Activated CD4-positive, alpha-beta T cell treated with anti-CD3 and anti-CD28 coated beads for 36 hours (primary cell): ENCODE measurements at regions of chr6 and their contacts with region 1.

Region 1: DNA sequence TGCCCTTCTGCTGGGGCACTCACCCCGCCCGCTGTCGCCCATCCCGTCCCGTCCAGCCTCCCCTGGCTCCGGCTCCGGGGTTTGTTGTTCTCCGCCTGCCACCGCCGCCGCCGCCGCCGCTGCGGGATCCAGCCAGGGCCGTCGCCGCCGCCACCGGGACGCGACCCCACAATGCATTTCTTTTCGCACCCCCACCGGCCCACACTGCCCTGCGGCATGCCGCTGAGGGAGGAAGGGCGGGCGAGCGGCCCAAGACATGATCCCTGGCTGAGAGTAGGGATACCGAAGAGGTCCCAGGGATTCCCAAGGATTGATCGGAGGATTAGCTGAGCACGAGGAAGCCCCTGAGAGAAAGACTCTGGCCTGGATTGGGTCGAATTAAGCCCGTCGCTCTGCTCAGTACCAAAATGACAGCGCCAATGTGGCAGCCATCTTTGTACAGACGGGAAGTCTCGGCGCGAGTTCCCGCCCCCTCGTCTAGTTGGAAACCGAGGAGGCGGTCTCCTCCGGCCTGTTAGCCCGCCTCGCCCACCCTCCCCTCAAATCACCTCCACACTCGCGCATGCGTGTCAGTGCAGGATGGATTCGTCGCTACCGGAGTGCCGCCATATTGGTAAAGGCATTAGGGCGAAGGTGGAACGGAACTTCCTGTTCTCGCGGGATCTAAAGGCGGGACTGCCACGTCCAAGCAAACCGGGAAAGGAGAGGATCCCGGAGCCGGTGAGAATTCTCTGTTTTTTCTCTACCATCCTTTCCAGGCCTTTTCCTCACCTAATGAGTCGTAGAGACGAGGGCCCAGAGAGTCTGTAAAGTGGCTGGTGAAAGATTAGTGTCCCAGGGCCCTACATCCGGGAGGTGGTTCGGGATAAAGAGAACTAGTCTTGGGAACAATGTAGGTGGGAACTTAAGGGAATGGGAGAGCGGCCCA is at the starts of genes RXRB and SLC39A7:
- DNase-seq: peak; percentile 100
- ATAC-seq: peak; percentile 64
- H3K4me3 Mint-ChIP-seq: peak within 1 kb of the TSS; percentile 100
- H3K27ac Mint-ChIP-seq: peak within 1 kb of the TSS; percentile 99
- H3K4me1 Mint-ChIP-seq: peaks cover 64% of the 10 kb centered on the region
- H3K27me3 Mint-ChIP-seq: no peaks in the 10 kb centered on the region
- total RNA-seq, gene RXRB: 41.0 to 45.4 TPM
- total RNA-seq, gene SLC39A7: 33.0 to 41.8 TPM

Region 2: GRCh38 chr6:31739639-31740396 is 1460.7 kb before region 1 on chr6 and contains the start of gene MSH5:
- CTCF ChIA-PET with region 1: interaction called, 3 read pairs
- POLR2A ChIA-PET with region 1: no interaction called
- intact Hi-C with region 1: loop called in 1 of 2 experiments (anchors 10 kb)
- DNase-seq: peak; percentile 98
- ATAC-seq: peak; percentile 87
- H3K4me3 Mint-ChIP-seq: peak within 1 kb of the TSS; percentile 96
- H3K27ac Mint-ChIP-seq: peak within 1 kb of the TSS; percentile 86
- H3K4me1 Mint-ChIP-seq: peaks cover 46% of the 10 kb centered on the region
- H3K27me3 Mint-ChIP-seq: no peaks in the 10 kb centered on the region
- total RNA-seq, gene MSH5: 92.1 to 126 TPM

Region 3: DNA sequence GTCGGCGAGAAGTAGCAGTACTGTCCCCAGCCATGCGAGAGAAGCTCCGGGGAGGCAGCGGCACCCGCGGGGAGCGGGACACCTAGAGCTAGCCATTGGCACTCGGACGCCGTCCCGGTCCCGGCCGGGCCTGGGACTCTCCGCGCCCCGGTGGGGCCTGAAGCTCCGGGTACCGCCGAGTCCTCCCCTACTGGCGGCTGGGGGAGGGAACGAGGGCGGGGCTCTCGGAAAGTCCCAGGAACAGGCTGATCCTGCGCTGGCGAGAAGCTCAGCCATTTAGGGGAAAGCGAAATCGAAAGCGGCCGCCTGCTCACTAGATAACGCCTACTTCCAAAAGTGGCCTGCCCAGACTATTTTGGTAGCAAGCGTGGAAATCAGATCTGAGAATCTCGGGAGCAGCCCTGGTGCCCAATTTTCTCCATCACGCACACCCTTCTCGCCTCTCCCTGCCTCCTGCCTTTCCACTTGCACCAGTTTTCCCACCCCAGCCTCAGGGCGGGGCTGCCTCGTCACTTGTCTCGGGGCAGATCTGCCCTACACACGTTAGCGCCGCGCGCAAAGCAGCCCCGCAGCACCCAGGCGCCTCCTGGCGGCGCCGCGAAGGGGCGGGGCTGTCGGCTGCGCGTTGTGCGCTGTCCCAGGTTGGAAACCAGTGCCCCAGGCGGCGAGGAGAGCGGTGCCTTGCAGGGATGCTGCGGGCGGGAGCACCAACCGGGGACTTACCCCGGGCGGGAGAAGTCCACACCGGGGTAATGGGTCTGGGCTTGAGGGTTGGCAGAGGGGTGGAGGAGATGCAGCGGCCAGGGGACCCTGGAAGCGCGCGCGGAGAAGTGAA is 346.7 kb before region 1 on chr6 and contains the starts of genes PSMB9 and TAP1:
- CTCF ChIA-PET with region 1: no interaction called
- POLR2A ChIA-PET with region 1: no interaction called
- intact Hi-C with region 1: loop called in 1 of 2 experiments (anchors 2 kb)
- DNase-seq: peak; percentile 98
- ATAC-seq: peak; percentile 84
- H3K4me3 Mint-ChIP-seq: peak within 1 kb of the TSS; percentile 100
- H3K27ac Mint-ChIP-seq: peak within 1 kb of the TSS; percentile 99
- H3K4me1 Mint-ChIP-seq: peaks cover 62% of the 10 kb centered on the region
- H3K27me3 Mint-ChIP-seq: no peaks in the 10 kb centered on the region
- total RNA-seq, gene PSMB9: 210 to 282 TPM
- total RNA-seq, gene TAP1: 191 to 255 TPM

Region 4: GRCh38 chr6:33161354-33162331 is 38.8 kb before region 1 on chr6:
- CTCF ChIA-PET with region 1: interaction called, 5 read pairs
- POLR2A ChIA-PET with region 1: no interaction called
- intact Hi-C with region 1: loop called (anchors 1 kb)
- DNase-seq: peak; percentile 90
- ATAC-seq: peak; percentile 95
- H3K4me3 Mint-ChIP-seq: peak overlapping the region; percentile 71
- H3K27ac Mint-ChIP-seq: peak overlapping the region; percentile 43
- H3K4me1 Mint-ChIP-seq: peaks cover 10% of the 10 kb centered on the region
- H3K27me3 Mint-ChIP-seq: peaks cover 4% of the 10 kb centered on the region

Region 5: GRCh38 chr6:33288921-33289748 is 88.7 kb after region 1 on chr6 and contains the starts of genes PFDN6 and WDR46:
- CTCF ChIA-PET with region 1: interaction called, 3 read pairs
- POLR2A ChIA-PET with region 1: no interaction called
- intact Hi-C with region 1: loop called in 1 of 2 experiments (anchors 1 kb)
- DNase-seq: peak; percentile 87
- ATAC-seq: peak; percentile 98
- H3K4me3 Mint-ChIP-seq: peak within 1 kb of the TSS; percentile 98
- H3K27ac Mint-ChIP-seq: peak within 1 kb of the TSS; percentile 97
- H3K4me1 Mint-ChIP-seq: peaks cover 37% of the 10 kb centered on the region
- H3K27me3 Mint-ChIP-seq: no peaks in the 10 kb centered on the region
- total RNA-seq, gene PFDN6: 65.4 to 96.9 TPM
- total RNA-seq, gene WDR46: 63.5 to 69.4 TPM

Region 6: DNA sequence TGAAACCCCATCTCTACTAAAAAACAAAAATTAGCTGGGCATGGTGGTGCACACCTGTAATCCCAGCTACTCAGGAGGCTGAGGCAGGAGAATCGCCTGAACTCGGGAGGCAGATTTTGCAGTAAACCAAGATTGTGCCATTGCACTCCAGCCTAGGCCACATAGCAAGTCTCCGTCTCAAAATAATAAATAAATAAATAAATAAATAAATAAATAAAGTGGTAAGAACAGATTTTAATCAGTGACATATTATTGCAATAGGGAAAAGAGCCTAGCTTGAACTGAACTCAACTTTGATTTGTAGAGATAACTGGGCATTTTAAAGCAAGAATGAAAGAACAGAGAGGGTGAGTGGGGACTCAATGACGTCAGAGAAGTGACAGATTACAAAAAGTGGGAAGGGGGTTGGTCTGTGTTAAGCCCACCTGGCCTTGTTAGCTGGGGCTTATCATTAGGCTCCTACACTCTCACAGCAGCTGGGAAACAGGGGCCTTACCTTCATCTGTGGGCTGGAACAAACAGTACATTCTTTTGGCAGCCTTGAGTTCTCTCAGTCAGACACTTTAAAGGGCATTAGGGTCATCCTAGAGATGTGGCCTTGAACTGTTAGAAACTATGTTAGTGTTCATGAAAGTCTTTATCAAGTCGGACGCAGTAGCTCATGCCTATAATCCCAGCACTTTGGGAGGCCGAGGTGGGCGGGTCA is 166.7 kb after region 1 on chr6:
- CTCF ChIA-PET with region 1: no interaction called
- POLR2A ChIA-PET with region 1: no interaction called
- intact Hi-C with region 1: no loop called
- DNase-seq: no peak
- ATAC-seq: no peak
- H3K4me3 Mint-ChIP-seq: no peak overlapping the region
- H3K27ac Mint-ChIP-seq: no peak overlapping the region
- H3K4me1 Mint-ChIP-seq: no peaks in the 10 kb centered on the region
- H3K27me3 Mint-ChIP-seq: no peaks in the 10 kb centered on the region

Region 7: DNA sequence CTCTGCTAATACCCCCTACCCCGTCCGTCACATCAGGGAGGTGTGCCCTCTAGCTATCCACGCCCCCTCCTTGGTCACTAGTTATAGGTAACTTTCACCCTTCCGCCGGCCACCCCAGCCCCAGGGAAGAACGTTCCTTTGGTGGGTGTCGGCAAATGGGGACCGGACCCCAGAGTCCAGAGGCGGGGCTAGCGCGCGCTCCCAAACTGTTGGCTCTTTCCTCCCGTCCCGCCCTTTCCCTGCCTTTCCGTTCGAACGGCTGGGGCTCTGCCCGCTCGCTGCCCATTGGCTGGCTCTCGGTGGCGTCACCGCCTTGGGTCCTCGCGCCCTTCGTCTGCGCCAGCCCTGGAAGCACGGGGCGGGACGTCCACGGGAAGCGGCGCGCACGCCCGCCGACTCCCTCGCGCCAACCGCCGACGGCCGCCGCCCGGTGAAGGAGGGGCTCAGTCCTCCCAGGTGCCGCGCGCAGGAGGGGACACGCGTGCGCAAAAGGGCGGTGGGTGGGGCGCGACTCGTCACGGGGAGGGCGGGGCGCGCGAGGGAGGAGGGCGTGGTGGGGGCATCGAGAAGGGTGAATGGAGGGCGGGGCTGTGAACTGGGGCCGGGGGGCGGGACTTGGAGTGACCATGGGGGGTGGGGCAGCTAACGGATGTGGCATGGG is 209.7 kb after region 1 on chr6:
- CTCF ChIA-PET with region 1: no interaction called
- POLR2A ChIA-PET with region 1: no interaction called
- intact Hi-C with region 1: loop called (anchors 1 to 10 kb)
- DNase-seq: peak; percentile 98
- ATAC-seq: peak; percentile 88
- H3K4me3 Mint-ChIP-seq: peak overlapping the region; percentile 80
- H3K27ac Mint-ChIP-seq: peak overlapping the region; percentile 96
- H3K4me1 Mint-ChIP-seq: peaks cover 31% of the 10 kb centered on the region
- H3K27me3 Mint-ChIP-seq: no peaks in the 10 kb centered on the region

Region 8: DNA sequence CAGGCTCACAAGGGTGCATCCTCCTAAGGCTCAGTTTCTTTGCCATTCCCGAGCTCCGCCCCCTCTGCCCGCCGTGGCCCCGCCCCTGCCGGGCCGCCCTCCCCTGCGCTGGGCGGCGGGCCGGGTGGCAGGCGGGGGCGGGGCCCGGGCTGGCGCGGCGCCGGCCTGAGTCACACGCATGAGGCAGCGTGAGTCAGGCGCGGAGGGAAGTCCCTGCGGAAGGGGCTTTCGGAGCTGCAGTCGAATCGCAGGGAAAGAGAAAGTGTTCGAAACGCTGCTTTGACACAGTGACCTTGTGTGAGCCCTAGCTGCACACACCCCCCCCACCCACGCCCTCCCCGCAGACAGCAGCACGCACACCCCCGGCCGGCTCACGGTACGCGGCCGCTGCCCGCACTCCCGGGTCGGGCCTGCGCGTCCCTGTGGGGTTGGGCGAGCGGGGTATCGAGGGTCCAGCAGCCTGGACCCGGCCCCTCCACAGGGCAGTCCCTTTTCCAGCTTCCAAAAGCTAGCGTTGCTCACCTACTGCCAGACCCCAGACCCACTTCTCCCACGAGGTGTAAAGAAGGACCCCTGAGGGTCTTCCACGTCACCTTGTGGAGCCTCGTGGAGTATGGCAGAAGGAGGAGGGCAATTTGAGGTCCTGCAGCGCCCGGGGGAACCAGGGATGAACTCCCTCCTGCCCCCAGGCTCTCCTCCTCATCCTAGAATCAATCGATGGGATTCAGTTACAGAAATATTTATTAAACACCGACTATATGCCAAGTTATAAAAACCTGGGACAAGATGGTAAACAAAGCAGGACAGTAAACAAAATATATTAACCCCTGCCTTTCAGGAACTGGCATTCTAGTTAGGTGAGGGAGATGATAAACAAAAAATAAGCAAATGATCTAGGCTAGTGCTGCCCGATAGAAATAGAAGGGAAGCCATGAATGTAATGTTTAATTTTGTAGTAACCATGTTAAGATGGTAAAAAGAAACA is 1023.8 kb after region 1 on chr6:
- CTCF ChIA-PET with region 1: no interaction called
- POLR2A ChIA-PET with region 1: no interaction called
- intact Hi-C with region 1: loop called in 1 of 2 experiments (anchors 10 kb)
- DNase-seq: peak; percentile 98
- ATAC-seq: peak; percentile 97
- H3K4me3 Mint-ChIP-seq: peak overlapping the region; percentile 52
- H3K27ac Mint-ChIP-seq: peak overlapping the region; percentile 88
- H3K4me1 Mint-ChIP-seq: peaks cover 44% of the 10 kb centered on the region
- H3K27me3 Mint-ChIP-seq: no peaks in the 10 kb centered on the region